ENCODE measurements at regions of chr1 and their contacts with region 1.

Region 1: GRCh38 chr1:161292631-161293030 is 17.1 kb downstream of the MPZ start:
- DNase-seq: no peak
- H3K4me3 Mint-ChIP-seq: no peak overlapping the region
- H3K27ac Mint-ChIP-seq: no peak overlapping the region
- H3K4me1 Mint-ChIP-seq: no peaks in the 10 kb centered on the region
- H3K27me3 Mint-ChIP-seq: peaks cover 4% of the 10 kb centered on the region

Region 2: DNA sequence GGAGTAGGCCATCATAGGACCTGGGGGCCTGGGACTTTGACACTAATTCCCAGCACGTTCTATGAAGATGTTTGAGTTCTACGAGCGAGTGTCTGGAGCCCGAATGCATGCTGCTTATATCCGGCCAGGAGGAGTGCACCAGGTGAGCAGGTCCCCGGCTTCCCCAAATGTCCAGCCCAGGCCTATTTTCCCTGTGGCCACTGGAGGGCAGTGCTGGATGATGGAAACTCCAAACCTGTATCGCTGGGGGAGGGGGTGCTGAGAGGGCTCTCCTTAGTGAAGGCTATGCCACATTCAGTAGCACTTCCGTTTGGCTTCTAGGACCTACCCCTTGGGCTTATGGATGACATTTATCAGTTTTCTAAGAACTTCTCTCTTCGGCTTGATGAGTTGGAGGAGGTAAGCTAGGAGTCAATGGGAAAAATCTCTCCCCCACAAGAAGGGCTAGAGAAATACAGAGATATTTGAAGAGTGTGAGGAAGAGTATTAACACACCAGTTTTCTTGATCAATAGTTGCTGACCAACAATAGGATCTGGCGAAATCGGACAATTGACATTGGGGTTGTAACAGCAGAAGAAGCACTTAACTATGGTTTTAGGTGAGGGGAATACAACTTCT is 82.7 kb before region 1 on chr1:
- CTCF ChIA-PET with region 1: interaction called, 15 read pairs
- DNase-seq: peak; percentile 83
- H3K4me3 Mint-ChIP-seq: no peak overlapping the region
- H3K27ac Mint-ChIP-seq: peak overlapping the region; percentile 82
- H3K4me1 Mint-ChIP-seq: peaks cover 47% of the 10 kb centered on the region
- H3K27me3 Mint-ChIP-seq: no peaks in the 10 kb centered on the region

Region 3: GRCh38 chr1:161305867-161306519 is 13.4 kb after region 1 on chr1:
- CTCF ChIA-PET with region 1: interaction called, 16 read pairs
- DNase-seq: peak; percentile 92
- H3K4me3 Mint-ChIP-seq: peak overlapping the region; percentile 94
- H3K27ac Mint-ChIP-seq: peak overlapping the region; percentile 79
- H3K4me1 Mint-ChIP-seq: peaks cover 43% of the 10 kb centered on the region
- H3K27me3 Mint-ChIP-seq: peaks cover 10% of the 10 kb centered on the region